PC-9 (cell line): ENCODE measurements at regions of chr10 and their contacts with region 1.

Region 1: GRCh38 chr10:70255329-70256299 is 22.4 kb upstream of the PPA1 start:
- DNase-seq: peak; percentile 88 to 94
- H3K4me3 ChIP-seq: no peak overlapping the region
- H3K27ac ChIP-seq: no peak overlapping the region; the same call in 1 of the 2 replicates
- H3K4me1 ChIP-seq: peaks cover 57% of the 10 kb centered on the region
- H3K27me3 ChIP-seq: no peaks in the 10 kb centered on the region
- CTCF ChIP-seq: no peak

Region 2: GRCh38 chr10:68600041-68600778 is 1655.4 kb before region 1 on chr10:
- CTCF ChIA-PET with region 1: no interaction called
- POLR2A ChIA-PET with region 1: interaction called, 13 read pairs
- intact Hi-C with region 1: no loop called
- DNase-seq: peak; percentile 57 to 67
- H3K4me3 ChIP-seq: peak overlapping the region; percentile 53
- H3K27ac ChIP-seq: no peak overlapping the region
- H3K4me1 ChIP-seq: peaks cover 11% of the 10 kb centered on the region
- H3K27me3 ChIP-seq: no peaks in the 10 kb centered on the region
- CTCF ChIP-seq: no peak

Region 3: DNA sequence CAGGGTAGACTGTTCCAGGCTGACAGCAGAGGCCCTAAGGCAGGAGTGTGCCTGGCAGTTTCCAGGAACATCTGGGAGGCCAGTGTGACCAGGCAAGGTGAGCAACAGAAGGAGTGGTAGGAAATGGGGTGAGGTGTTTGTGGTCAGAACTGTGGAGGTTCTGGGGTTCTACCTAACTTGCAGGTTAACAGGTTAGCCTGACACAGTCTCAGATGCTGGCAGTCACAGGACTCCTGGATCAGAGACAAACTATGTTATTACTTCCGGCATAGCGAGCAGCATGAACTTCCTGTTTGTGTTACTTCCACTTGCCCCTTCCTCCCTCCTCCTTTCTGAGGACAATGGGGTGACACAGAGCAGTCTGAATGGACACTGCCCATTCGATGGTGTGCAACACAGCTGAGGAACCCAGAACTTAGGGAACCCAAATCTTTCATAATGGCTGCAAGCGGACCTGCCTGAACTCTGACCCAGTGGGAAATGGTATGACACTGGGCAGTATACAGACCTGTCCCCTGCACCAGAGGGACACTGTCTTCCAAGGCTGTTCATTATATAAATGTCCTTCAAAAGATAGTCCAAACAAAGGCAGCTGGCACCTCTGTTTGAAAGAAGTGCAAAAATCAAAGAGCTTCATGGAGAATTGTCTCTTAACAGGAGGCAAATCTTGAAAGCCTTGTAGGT is 81.4 kb before region 1 on chr10:
- CTCF ChIA-PET with region 1: no interaction called
- POLR2A ChIA-PET with region 1: no interaction called
- intact Hi-C with region 1: no loop called
- DNase-seq: peak; percentile 18 to 81
- H3K4me3 ChIP-seq: no peak overlapping the region
- H3K27ac ChIP-seq: no peak overlapping the region
- H3K4me1 ChIP-seq: peaks cover 20% of the 10 kb centered on the region
- H3K27me3 ChIP-seq: no peaks in the 10 kb centered on the region
- CTCF ChIP-seq: no peak

Region 4: DNA sequence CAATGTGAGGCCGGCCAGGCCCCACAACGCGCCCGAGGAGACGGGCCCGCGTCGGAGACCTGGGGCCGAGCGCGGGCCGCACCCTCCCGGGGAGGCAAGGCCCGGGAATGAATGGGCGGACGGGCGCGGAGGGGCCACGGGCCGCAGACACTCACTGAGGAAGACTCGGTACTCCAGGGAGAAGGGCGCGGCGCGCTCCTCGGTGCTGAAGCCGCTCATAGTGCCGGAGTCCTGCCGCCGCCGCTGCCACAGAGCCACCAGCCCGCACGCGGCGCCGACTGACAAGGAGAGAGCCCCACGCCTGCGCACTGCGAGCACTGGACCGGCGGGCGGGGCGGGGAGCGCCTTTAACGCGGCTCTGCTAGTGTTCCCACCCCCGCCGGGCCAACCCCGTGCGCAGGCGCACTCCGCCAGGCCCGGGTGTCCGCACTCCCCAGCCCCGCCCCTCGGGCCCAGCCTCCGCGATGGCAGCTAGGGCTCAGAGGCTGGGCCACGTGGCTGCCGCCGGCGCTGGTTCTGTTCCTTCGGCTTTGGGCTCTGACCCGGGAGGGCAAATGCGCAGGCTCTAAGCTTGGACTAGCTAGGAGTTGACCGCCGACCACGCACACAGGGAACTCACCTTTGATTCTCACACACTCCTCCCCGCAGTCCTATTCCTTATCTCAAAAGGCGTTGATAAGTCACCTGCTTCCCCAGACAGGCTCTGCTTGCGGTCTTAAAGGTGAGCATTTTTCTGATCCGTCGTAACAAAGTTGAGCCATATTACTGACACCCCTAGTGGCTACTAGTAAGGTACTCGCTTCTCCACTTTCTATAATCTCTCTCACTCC is 22.3 kb before region 1 on chr10 and contains the start of gene PPA1:
- CTCF ChIA-PET with region 1: interaction called, 4 read pairs
- POLR2A ChIA-PET with region 1: interaction called, 5 read pairs
- intact Hi-C with region 1: loop called (anchors 2 kb)
- DNase-seq: peak; percentile 91 to 100
- H3K4me3 ChIP-seq: peak within 1 kb of the TSS; percentile 79
- H3K27ac ChIP-seq: peak within 1 kb of the TSS; percentile 77
- H3K4me1 ChIP-seq: peaks cover 52% of the 10 kb centered on the region
- H3K27me3 ChIP-seq: no peaks in the 10 kb centered on the region
- CTCF ChIP-seq: peak; percentile 52
- total RNA-seq, gene PPA1: 224 and 236 TPM in 2 replicates

Region 5: GRCh38 chr10:70337201-70337651 is 81.6 kb after region 1 on chr10:
- CTCF ChIA-PET with region 1: no interaction called
- POLR2A ChIA-PET with region 1: no interaction called
- intact Hi-C with region 1: no loop called
- DNase-seq: no peak
- H3K4me3 ChIP-seq: no peak overlapping the region
- H3K27ac ChIP-seq: no peak overlapping the region
- H3K4me1 ChIP-seq: peaks cover 15% of the 10 kb centered on the region
- H3K27me3 ChIP-seq: no peaks in the 10 kb centered on the region
- CTCF ChIP-seq: no peak

Region 6: DNA sequence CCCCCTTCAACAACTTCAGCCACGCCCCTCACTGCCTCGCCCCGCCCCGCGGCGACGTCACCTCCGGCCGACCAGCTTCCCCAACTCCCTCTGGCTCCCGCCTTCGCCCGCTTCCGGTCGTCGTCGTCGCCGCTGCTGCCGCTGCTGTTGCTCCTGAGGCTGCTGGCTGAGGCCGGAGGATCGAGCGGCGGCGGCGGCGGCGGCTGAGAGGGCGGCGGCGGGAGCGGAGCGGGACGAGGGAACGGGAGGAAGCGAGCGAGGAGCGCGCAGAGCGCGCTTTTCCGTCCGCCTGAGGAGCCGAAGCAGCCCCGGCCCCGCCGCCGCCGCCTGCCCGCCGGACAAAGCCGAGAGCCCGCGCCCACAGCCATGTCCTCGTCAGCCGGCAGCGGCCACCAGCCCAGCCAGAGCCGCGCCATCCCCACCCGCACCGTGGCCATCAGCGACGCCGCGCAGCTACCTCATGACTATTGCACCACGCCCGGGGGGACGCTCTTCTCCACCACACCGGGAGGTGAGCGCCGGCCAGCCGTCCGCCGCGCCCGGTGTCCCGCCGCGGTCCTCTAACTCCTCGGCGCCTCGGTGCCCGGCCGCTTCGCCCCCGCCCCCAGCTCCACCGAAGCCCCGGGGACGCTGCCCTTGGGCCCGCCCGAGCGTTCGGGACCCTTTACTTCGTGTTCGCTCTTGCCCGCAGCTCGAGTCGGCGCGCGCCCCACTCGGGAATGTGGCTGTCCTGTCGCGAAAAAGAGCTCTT is 148.6 kb after region 1 on chr10 and contains the start of gene EIF4EBP2:
- CTCF ChIA-PET with region 1: no interaction called
- POLR2A ChIA-PET with region 1: interaction called, 17 read pairs
- intact Hi-C with region 1: no loop called
- DNase-seq: peak; percentile 86 to 99
- H3K4me3 ChIP-seq: peak within 1 kb of the TSS; percentile 82
- H3K27ac ChIP-seq: peak within 1 kb of the TSS; percentile 70
- H3K4me1 ChIP-seq: peaks cover 24% of the 10 kb centered on the region
- H3K27me3 ChIP-seq: no peaks in the 10 kb centered on the region
- CTCF ChIP-seq: no peak; the same call in 1 of the 2 replicates
- total RNA-seq, gene EIF4EBP2: 57.4 and 80.3 TPM in 2 replicates

Region 7: DNA sequence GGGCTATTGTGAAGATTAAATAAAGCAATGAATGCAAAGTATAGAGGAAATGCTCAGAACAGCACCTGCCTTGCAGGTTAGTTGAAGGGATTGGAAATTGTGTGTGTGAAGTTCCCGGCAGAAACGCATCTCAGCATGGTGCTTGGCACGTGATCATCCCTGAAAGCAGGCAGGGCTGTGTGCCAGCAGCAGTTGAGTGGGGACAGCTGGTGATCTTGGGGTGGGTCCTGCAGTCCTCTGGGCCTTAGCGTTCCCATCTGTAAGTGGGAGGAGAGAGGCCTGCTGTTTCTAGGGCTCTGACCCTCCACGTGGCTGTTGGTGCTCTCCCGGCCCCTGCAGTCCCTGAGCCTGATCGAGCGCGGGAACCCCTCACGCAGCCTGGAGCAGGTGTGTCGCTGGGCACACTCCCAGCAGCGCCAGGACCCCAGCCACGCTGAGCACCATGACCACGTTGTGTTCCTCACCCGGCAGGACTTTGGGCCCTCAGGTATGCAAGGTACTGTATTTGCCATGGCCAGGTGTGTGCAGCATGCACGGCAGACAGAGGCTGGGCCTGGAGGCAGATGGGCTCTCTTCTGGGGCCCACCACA is 474.2 kb after region 1 on chr10:
- CTCF ChIA-PET with region 1: no interaction called
- POLR2A ChIA-PET with region 1: no interaction called
- intact Hi-C with region 1: no loop called
- DNase-seq: no peak
- H3K4me3 ChIP-seq: no peak overlapping the region
- H3K27ac ChIP-seq: no peak overlapping the region
- H3K4me1 ChIP-seq: no peaks in the 10 kb centered on the region
- H3K27me3 ChIP-seq: no peaks in the 10 kb centered on the region
- CTCF ChIP-seq: no peak